Panc1 (cell line): ENCODE measurements at regions of chr10 and their contacts with region 1.

Region 1: DNA sequence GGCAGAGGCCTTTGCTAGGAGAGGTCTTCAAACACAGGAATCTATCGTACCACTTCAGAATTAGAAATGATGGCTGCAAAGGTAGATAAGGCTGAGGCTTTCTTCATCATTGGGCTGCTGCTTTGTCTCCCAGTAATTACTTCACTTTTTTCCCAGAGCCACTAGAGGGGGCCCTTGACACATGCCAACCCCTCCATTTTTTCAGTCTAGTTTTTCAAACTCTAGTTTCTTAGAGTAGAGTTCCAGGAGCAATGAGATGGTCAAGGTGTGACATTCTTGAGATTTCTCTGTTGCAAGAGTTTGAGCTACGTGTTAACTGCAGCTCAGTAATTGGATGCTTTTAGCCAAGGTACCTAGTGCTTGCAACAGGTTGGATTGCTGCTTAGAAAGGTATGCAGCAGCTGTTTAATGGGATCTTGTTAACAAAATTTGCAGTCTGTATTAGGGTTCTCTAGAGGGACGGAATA is 33.8 kb upstream of the RBM20 start:
- DNase-seq: no peak
- ATAC-seq: peak; percentile 80
- H3K4me3 ChIP-seq: no peak overlapping the region
- H3K27ac ChIP-seq: no peak overlapping the region
- H3K4me1 ChIP-seq: no peaks in the 10 kb centered on the region
- H3K27me3 ChIP-seq: no peaks in the 10 kb centered on the region
- CTCF ChIP-seq: peak; percentile 97

Region 2: GRCh38 chr10:110241407-110241806 is 368.9 kb before region 1 on chr10:
- CTCF ChIA-PET with region 1: no interaction called
- POLR2A ChIA-PET with region 1: no interaction called
- in situ Hi-C with region 1: no loop called
- intact Hi-C with region 1: no loop called
- DNase-seq: no peak
- ATAC-seq: no peak
- H3K4me3 ChIP-seq: no peak overlapping the region
- H3K27ac ChIP-seq: no peak overlapping the region
- H3K4me1 ChIP-seq: no peaks in the 10 kb centered on the region; the same call in 1 of the 2 replicates
- H3K27me3 ChIP-seq: no peaks in the 10 kb centered on the region
- CTCF ChIP-seq: no peak

Region 3: DNA sequence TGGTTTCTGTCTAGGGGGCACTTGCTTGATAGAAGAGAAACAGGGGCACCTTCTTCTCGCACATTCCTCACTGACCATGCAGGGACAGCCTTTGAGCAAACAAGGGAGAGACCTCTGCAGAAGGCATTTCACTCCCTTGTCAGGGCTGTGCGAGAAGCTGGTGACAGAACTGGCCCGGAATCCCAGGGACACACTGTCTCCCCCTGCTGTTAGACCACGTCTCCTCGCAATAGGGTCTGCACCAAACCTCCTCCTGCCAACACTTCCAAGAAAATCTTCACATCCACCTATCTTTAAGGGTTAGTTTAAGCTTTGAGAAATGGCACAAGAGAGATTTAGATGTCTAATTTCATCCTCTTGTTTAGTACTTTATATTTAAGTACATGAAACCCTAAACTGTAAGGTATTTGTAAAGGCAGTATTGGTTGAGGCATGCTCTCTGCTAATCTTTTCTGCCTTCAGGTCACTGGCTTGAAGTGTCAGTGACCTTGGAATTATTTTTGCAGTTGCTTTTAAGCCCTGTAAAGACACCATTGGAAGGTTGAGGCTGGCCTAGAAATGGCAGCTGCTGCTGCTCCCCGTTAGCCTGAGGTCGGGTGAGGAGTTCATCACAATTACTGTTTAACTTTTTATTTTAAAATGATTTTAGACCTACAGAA is 70.8 kb after region 1 on chr10:
- CTCF ChIA-PET with region 1: no interaction called
- POLR2A ChIA-PET with region 1: no interaction called
- in situ Hi-C with region 1: no loop called
- intact Hi-C with region 1: loop called (anchors 2 kb)
- DNase-seq: no peak
- ATAC-seq: peak; percentile 90
- H3K4me3 ChIP-seq: no peak overlapping the region
- H3K27ac ChIP-seq: no peak overlapping the region
- H3K4me1 ChIP-seq: no peaks in the 10 kb centered on the region
- H3K27me3 ChIP-seq: peaks cover 24% of the 10 kb centered on the region
- CTCF ChIP-seq: peak; percentile 80

Region 4: GRCh38 chr10:110733218-110733952 is 123.0 kb after region 1 on chr10:
- CTCF ChIA-PET with region 1: no interaction called
- POLR2A ChIA-PET with region 1: no interaction called
- in situ Hi-C with region 1: no loop called
- intact Hi-C with region 1: loop called (anchors 10 kb)
- DNase-seq: no peak
- ATAC-seq: peak; percentile 84
- H3K4me3 ChIP-seq: peak overlapping the region; percentile 37 to 44
- H3K27ac ChIP-seq: no peak overlapping the region
- H3K4me1 ChIP-seq: peaks cover 10% of the 10 kb centered on the region; the same call in 1 of the 2 replicates
- H3K27me3 ChIP-seq: peaks cover 32% of the 10 kb centered on the region
- CTCF ChIP-seq: no peak

Region 5: DNA sequence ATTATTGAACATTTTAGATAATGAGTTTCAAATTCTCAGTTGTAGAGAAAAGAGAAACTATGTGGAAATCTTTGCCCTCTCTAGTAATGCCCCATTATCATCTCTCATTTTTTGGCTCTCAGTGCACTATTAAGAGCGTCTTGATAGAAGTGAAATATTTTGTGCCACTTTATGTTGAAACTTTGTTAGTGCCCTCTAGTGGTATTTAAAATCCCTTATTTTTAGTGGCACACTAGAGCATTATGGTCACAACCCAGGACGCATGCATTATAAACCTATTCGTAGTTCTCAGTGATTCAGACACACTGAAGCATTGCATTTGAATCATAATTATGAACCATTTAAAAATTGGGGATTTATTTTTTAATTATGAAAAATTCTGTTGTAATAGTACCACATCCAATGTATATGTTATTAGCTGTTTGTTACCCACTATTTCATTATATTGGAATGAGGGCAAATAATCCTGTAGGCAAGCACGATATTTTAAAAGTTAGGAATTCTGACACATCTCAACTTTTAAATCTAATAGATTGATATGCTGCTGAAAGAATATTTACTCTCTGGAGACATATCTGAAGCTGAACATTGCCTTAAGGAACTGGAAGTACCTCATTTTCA is 283.3 kb after region 1 on chr10:
- CTCF ChIA-PET with region 1: no interaction called
- POLR2A ChIA-PET with region 1: no interaction called
- in situ Hi-C with region 1: no loop called
- intact Hi-C with region 1: loop called (anchors 5 kb)
- DNase-seq: no peak
- ATAC-seq: peak; percentile 94
- H3K4me3 ChIP-seq: no peak overlapping the region
- H3K27ac ChIP-seq: no peak overlapping the region
- H3K4me1 ChIP-seq: no peaks in the 10 kb centered on the region; the same call in 1 of the 2 replicates
- H3K27me3 ChIP-seq: no peaks in the 10 kb centered on the region
- CTCF ChIP-seq: peak; percentile 72; the same call in 1 of the 2 replicates